ENCODE measurements at regions of chr11 and their contacts with region 1.

Region 1: GRCh38 chr11:75797792-75798191 is 17.2 kb upstream of the UVRAG start:
- DNase-seq: peak; percentile 54

Region 2: GRCh38 chr11:74480688-74481409 is 1316.9 kb before region 1 on chr11:
- intact Hi-C with region 1: loop called in 1 of 2 experiments (anchors 5 kb)
- DNase-seq: no peak

Region 3: GRCh38 chr11:75768112-75768908 is 29.5 kb before region 1 on chr11 and contains the start of gene DGAT2:
- intact Hi-C with region 1: no loop called
- DNase-seq: peak; percentile 93
- total RNA-seq, gene DGAT2: 2.1 to 3.4 TPM

Region 4: GRCh38 chr11:76329084-76329984 is 531.5 kb after region 1 on chr11:
- intact Hi-C with region 1: loop called in 1 of 2 experiments (anchors 10 kb)
- DNase-seq: peak; percentile 62

Measured in posterior vena cava (tissue), 2 donors.